Naive thymus-derived CD4-positive, alpha-beta T cell (primary cell): ENCODE measurements at regions of chr14 and their contacts with region 1.

Region 1: GRCh38 chr14:20782280-20782890 is 1.3 kb downstream of the RNASE6 start:
- DNase-seq: peak in 6 of 9 donors; percentile 2 to 36 (median 22)
- ATAC-seq: peak; percentile 73
- H3K4me3 ChIP-seq: peak overlapping the region; percentile 17
- H3K4me3 Mint-ChIP-seq: peak overlapping the region; percentile 52 to 87 (median 81)
- H3K27ac ChIP-seq: peak overlapping the region; percentile 62
- H3K27ac Mint-ChIP-seq: peak overlapping the region; percentile 67 to 93 (median 85)
- H3K4me1 ChIP-seq: peaks cover 11 to 29% of the 10 kb centered on the region in 2 donors
- H3K4me1 Mint-ChIP-seq: peaks cover 32 to 50% (median 42%) of the 10 kb centered on the region in 7 donors
- H3K27me3 ChIP-seq: no peaks in the 10 kb centered on the region
- H3K27me3 Mint-ChIP-seq: peaks cover 0 to 11% (median 0%) of the 10 kb centered on the region in 5 donors

Region 2: DNA sequence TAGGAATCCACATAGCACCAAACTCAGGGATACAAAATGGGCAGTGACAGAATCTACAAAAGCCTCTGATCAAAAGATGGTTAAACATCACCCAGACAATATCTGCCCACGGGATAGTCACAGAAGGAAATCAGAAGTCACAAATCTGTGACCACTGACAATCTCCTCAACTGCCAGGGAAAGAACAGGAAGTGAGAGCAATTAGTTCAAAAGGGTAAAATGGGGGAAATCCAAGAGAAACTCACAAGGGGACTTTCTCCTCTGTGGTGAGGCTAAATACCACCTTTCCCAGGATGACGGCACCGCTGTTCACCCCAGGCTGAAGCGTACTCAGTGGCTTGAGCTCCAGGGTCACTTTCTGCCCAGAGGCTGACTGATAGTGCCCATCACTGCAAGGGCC is 487.3 kb before region 1 on chr14:
- CTCF ChIA-PET with region 1: no interaction called
- POLR2A ChIA-PET with region 1: no interaction called
- intact Hi-C with region 1: no loop called
- DNase-seq: no peak
- ATAC-seq: no peak
- H3K4me3 ChIP-seq: no peak overlapping the region
- H3K4me3 Mint-ChIP-seq: no peak overlapping the region
- H3K27ac ChIP-seq: no peak overlapping the region
- H3K27ac Mint-ChIP-seq: peak overlapping the region in 1 of 9 donors; percentile 86
- H3K4me1 ChIP-seq: no peaks in the 10 kb centered on the region
- H3K4me1 Mint-ChIP-seq: peaks cover 0 to 5% (median under 1%) of the 10 kb centered on the region in 7 donors
- H3K27me3 ChIP-seq: no peaks in the 10 kb centered on the region
- H3K27me3 Mint-ChIP-seq: no peaks in the 10 kb centered on the region

Region 3: DNA sequence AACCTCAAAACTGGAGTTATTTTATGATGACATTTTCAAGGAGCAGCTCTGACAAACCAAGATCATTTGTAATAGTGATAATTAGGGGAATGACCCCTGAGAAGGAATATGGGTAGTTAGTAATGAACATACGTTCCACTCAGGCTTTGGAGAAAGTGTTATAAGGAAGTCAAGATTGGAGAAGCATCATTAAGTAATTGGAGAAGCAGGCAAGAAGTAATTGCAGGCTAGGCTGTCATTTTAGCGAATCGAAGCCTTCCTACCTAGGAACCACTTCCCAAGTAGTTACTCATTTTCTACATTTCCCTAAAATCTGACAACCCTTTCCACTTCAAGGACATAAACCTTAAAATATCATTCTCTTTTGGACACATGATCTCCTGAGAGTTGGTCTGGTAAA is 13.0 kb before region 1 on chr14:
- CTCF ChIA-PET with region 1: no interaction called
- POLR2A ChIA-PET with region 1: no interaction called
- intact Hi-C with region 1: no loop called
- DNase-seq: no peak
- ATAC-seq: no peak
- H3K4me3 ChIP-seq: no peak overlapping the region
- H3K4me3 Mint-ChIP-seq: no peak overlapping the region
- H3K27ac ChIP-seq: no peak overlapping the region
- H3K27ac Mint-ChIP-seq: no peak overlapping the region
- H3K4me1 ChIP-seq: no peaks in the 10 kb centered on the region
- H3K4me1 Mint-ChIP-seq: peaks cover 0 to 1% (median 0%) of the 10 kb centered on the region in 7 donors
- H3K27me3 ChIP-seq: no peaks in the 10 kb centered on the region
- H3K27me3 Mint-ChIP-seq: peaks cover 0 to 15% (median 8%) of the 10 kb centered on the region in 5 donors

Region 4: GRCh38 chr14:20820063-20820904 is 37.9 kb after region 1 on chr14:
- CTCF ChIA-PET with region 1: no interaction called
- POLR2A ChIA-PET with region 1: no interaction called
- intact Hi-C with region 1: loop called in 1 of 2 experiments (anchors 5 kb)
- DNase-seq: no peak
- ATAC-seq: no peak
- H3K4me3 ChIP-seq: no peak overlapping the region
- H3K4me3 Mint-ChIP-seq: no peak overlapping the region
- H3K27ac ChIP-seq: no peak overlapping the region
- H3K27ac Mint-ChIP-seq: no peak overlapping the region
- H3K4me1 ChIP-seq: no peaks in the 10 kb centered on the region
- H3K4me1 Mint-ChIP-seq: peaks cover 0 to 5% (median 0%) of the 10 kb centered on the region in 7 donors
- H3K27me3 ChIP-seq: no peaks in the 10 kb centered on the region
- H3K27me3 Mint-ChIP-seq: peaks cover 0 to 10% (median 9%) of the 10 kb centered on the region in 5 donors